ENCODE measurements at regions of chrX and their contacts with region 1.

Region 1: GRCh38 chrX:109890895-109891502 is 111.9 kb upstream of the TMEM164 start:
- DNase-seq: peak; percentile 22 to 45
- ATAC-seq: peak in 7 of 8 donors; percentile 47 to 78 (median 70)
- H3K4me3 ChIP-seq: no peak overlapping the region
- H3K27ac ChIP-seq: peak overlapping the region in 1 of 10 donors; percentile 83
- H3K4me1 ChIP-seq: peaks cover 0 to 41% (median 0%) of the 10 kb centered on the region in 9 donors
- H3K27me3 ChIP-seq: peaks cover 0 to 17% (median 0%) of the 10 kb centered on the region in 7 donors
- CTCF ChIP-seq: peak; percentile 57 to 86 (median 72)

Region 2: GRCh38 chrX:109485470-109486340 is 405.3 kb before region 1 on chrX:
- intact Hi-C with region 1: loop called in 5 of 10 experiments (anchors 5 to 10 kb)
- DNase-seq: peak in 1 of 2 donors; percentile 50
- ATAC-seq: peak in 1 of 8 donors; percentile 52
- H3K4me3 ChIP-seq: no peak overlapping the region
- H3K27ac ChIP-seq: no peak overlapping the region
- H3K4me1 ChIP-seq: no peaks in the 10 kb centered on the region
- H3K27me3 ChIP-seq: peaks cover 0 to 44% (median 0%) of the 10 kb centered on the region in 7 donors
- CTCF ChIP-seq: peak; percentile 62 to 98 (median 86)

Region 3: DNA sequence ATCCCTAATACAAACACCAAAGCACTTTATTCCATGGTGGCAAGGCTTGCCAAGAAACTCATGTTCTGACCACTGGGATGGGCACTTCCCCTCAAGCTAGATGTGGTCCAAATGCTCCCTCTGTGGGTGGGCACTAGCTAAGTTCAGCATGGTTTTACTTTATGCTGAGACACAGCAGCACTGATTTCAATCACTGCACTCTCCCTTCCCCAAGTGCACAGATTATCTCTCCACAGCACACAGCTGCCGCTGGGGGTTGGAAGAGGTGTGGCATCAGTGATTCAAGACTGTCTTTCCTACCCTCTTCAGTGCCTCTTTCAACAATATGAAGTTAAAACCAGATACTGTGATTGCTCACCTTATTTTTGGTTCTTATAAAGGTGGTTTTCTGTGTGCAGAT is 392.6 kb before region 1 on chrX:
- intact Hi-C with region 1: loop called in 1 of 10 experiments (anchors 10 kb)
- DNase-seq: no peak
- ATAC-seq: no peak
- H3K4me3 ChIP-seq: no peak overlapping the region
- H3K27ac ChIP-seq: no peak overlapping the region
- H3K4me1 ChIP-seq: no peaks in the 10 kb centered on the region
- H3K27me3 ChIP-seq: peaks cover 0 to 58% (median 0%) of the 10 kb centered on the region in 7 donors
- CTCF ChIP-seq: no peak

Region 4: GRCh38 chrX:109709129-109709631 is 181.8 kb before region 1 on chrX:
- intact Hi-C with region 1: loop called in 7 of 10 experiments (anchors 2 to 10 kb)
- DNase-seq: no peak
- ATAC-seq: peak in 5 of 8 donors; percentile 52 to 70 (median 67)
- H3K4me3 ChIP-seq: no peak overlapping the region
- H3K27ac ChIP-seq: peak overlapping the region in 6 of 10 donors; percentile 19 to 82 (median 64)
- H3K4me1 ChIP-seq: peaks cover 0 to 75% (median 16%) of the 10 kb centered on the region in 9 donors
- H3K27me3 ChIP-seq: peaks cover 0 to 33% (median 0%) of the 10 kb centered on the region in 7 donors
- CTCF ChIP-seq: peak in 1 of 9 donors; percentile 9

Region 5: DNA sequence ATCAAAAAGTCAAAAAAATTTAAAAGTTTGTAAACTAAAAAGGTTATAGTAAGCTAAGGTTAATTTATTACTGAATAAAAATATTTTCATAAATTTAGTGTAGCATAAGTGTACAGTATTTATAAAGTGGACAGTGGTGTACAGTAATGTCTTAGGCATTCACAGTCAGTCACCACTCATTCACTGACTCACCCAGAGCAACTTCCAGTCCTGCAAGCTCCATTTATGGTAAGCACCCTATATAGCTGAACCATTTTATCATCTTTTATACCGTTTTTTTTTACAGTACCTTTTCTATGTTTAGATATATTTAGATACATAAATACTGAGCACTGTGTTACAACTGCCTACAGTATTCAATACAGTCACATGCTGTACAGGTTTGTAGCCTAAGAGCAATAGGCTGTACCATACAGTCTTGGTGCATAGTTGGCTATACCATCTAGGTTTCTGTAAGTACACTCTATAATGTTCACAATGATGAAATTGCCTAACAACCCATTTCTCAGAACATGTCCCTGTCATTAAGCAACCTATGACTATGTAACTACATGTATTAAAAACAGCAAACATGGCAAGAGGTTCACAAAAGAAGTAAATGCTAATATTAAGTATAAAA is 176.6 kb before region 1 on chrX:
- intact Hi-C with region 1: loop called in 7 of 10 experiments (anchors 2 to 10 kb)
- DNase-seq: no peak
- ATAC-seq: no peak
- H3K4me3 ChIP-seq: no peak overlapping the region
- H3K27ac ChIP-seq: no peak overlapping the region
- H3K4me1 ChIP-seq: peaks cover 0 to 74% (median 20%) of the 10 kb centered on the region in 9 donors
- H3K27me3 ChIP-seq: peaks cover 0 to 27% (median 0%) of the 10 kb centered on the region in 7 donors
- CTCF ChIP-seq: no peak